ENCODE measurements at regions of chr12 and their contacts with region 1.

Region 1: DNA sequence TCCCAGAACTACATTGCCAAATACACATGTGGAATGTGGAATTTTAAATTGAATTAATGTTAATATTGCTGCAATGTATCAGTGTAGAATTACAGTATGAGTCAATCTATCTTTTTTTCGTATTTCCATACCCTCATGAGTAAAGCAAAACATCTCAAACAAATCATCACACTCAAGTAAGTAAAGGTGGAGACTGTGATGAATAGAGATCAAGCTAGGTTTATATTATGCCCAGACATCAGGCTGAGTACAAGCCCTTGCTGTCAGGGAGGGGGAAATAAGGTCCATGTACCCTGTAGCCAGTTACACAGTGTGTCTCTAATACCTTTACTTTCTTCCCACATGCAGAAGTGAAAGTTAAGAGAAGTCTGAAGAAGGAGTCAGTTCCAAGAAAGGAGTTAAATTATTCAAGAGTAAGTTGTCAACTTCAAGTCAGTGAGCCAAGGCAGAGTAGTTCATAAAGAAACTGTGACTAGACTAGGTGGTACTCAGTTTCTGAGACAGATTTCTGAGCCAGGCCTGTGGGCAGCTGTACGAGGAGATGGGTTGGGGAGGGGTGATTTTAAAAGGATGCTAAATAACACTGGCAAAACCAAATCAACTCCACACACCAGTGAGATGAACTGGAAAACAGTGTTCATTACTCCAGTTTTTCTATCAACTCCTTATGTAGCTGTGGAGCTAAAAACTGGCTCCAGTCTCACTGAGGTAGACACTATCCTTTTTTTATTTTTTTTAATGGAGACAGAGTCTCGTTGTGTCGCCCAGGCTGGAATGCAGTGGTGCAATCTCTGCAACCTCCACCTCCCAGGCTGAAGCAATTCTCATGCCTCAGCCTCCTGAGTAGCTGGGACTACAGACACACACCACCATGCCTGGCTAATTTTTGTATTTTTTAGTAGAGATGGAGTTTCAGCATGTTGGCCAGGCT is 23.8 kb upstream of the STK38L start:
- DNase-seq: peak; percentile 46
- CTCF ChIP-seq: no peak

Region 2: GRCh38 chr12:27207615-27208413 is 12.5 kb before region 1 on chr12:
- CTCF ChIA-PET with region 1: interaction called, 12 read pairs
- POLR2A ChIA-PET with region 1: interaction called, 12 read pairs
- DNase-seq: peak; percentile 62
- CTCF ChIP-seq: no peak

Region 3: GRCh38 chr12:27237790-27238771 is 17.8 kb after region 1 on chr12:
- CTCF ChIA-PET with region 1: interaction called, 16 read pairs
- POLR2A ChIA-PET with region 1: interaction called, 6 read pairs
- DNase-seq: no peak
- CTCF ChIP-seq: no peak

Region 4: GRCh38 chr12:27243804-27244683 is 23.7 kb after region 1 on chr12 and contains the start of gene STK38L:
- CTCF ChIA-PET with region 1: interaction called, 16 read pairs
- POLR2A ChIA-PET with region 1: interaction called, 6 read pairs
- DNase-seq: peak; percentile 95
- CTCF ChIP-seq: peak; percentile 18